Motor neuron (in vitro differentiated cells): ENCODE measurements at regions of chr12 and their contacts with region 1.

Region 1: DNA sequence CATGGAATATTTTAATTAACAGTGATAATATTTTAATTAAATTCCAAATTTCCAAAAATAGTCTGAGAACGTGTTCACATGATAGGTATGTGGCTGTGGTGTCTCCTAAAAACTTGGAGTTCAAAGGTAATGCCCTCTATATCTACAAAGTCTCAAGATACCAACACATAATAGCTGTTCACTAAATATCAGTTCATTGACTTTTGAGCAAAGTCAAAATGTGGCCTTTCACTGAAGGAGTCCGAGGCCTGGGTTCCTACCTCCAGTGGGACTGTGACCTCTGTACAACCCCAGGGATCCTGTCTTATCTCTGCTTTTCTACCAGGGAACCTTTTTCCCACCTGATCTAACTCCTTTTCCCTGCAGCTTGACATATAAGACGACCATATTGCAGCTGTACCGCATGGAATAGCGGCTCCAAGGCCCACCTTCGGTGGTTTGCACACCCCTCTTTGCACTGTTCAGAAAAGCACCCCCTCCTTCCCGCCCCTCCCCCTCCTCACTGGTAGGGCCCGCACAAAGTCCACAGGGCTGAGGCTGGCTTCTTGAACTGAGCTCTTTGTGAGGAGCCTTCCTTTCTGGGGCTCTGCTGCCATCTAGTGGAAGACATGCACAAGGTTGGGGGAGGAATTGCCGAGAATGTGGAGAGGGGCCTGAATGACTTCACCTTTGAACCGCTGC is 3.1 kb downstream of the CCND2 start:
- ATAC-seq: peak; percentile 30 to 77 (median 35)
- H3K4me3 ChIP-seq: peak overlapping the region in 4 of 5 donors; percentile 16 to 89 (median 82)
- H3K27ac ChIP-seq: no peak overlapping the region
- H3K4me1 ChIP-seq: peaks cover 35 to 46% of the 10 kb centered on the region in 2 donors

Region 2: DNA sequence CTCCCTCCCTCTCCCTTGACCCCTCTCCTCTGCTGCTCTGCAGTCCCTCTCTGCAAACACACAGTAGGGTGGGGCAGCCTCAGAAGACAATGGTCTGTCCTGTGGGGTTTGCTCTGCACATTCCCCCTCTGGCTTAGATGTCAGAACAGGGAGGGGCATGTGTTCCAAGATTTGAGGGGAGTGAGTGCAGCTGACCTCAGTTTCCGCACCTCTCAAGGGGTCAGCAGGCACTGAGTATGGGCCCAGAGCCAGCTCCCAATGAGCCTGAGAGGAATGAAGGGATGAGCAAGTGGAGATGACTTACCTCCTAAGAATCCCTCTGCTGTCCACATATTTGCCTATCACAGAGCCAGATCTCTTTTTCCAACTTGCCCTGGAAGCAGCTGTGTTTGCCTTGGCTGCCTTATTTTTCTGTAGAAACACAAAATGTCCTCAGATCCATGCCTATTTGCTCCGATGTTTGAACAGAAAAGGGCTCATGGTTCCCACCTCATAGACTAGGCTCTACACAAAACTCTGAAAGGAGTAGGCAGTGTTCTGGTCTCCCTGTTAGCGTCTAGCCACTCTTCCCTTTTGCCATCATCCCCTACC is 635.1 kb before region 1 on chr12:
- in situ Hi-C with region 1: no loop called
- ATAC-seq: peak in 4 of 8 experiments; percentile 35 to 87 (median 68)
- H3K4me3 ChIP-seq: no peak overlapping the region
- H3K27ac ChIP-seq: no peak overlapping the region
- H3K4me1 ChIP-seq: peaks cover 10 to 15% of the 10 kb centered on the region in 2 donors

Region 3: GRCh38 chr12:3885277-3886094 is 391.2 kb before region 1 on chr12:
- in situ Hi-C with region 1: loop called in 8 of 9 experiments (anchors 10 to 25 kb)
- ATAC-seq: peak in 4 of 8 experiments; percentile 14 to 92 (median 50)
- H3K4me3 ChIP-seq: no peak overlapping the region
- H3K27ac ChIP-seq: no peak overlapping the region
- H3K4me1 ChIP-seq: peaks cover 19 to 27% of the 10 kb centered on the region in 2 donors

Region 4: GRCh38 chr12:3988519-3989448 is 287.9 kb before region 1 on chr12:
- in situ Hi-C with region 1: loop called in 2 of 9 experiments (anchors 25 kb)
- ATAC-seq: no peak
- H3K4me3 ChIP-seq: no peak overlapping the region
- H3K27ac ChIP-seq: no peak overlapping the region
- H3K4me1 ChIP-seq: no peaks in the 10 kb centered on the region

Region 5: GRCh38 chr12:4148418-4149056 is 128.1 kb before region 1 on chr12:
- in situ Hi-C with region 1: no loop called
- ATAC-seq: no peak
- H3K4me3 ChIP-seq: no peak overlapping the region
- H3K27ac ChIP-seq: no peak overlapping the region
- H3K4me1 ChIP-seq: no peaks in the 10 kb centered on the region

Region 6: GRCh38 chr12:4506870-4507269 is 230.2 kb after region 1 on chr12:
- in situ Hi-C with region 1: no loop called
- ATAC-seq: no peak
- H3K4me3 ChIP-seq: no peak overlapping the region
- H3K27ac ChIP-seq: no peak overlapping the region
- H3K4me1 ChIP-seq: no peaks in the 10 kb centered on the region